CD8-positive, alpha-beta T cell (primary cell): ENCODE measurements at regions of chr5 and their contacts with region 1.

Region 1: GRCh38 chr5:62376064-62376463 is 27.6 kb downstream of the DIMT1 start:
- DNase-seq: no peak
- ATAC-seq: no peak
- H3K4me3 ChIP-seq: no peak overlapping the region
- H3K4me3 Mint-ChIP-seq: no peak overlapping the region
- H3K27ac ChIP-seq: no peak overlapping the region
- H3K27ac Mint-ChIP-seq: no peak overlapping the region
- H3K4me1 ChIP-seq: no peaks in the 10 kb centered on the region
- H3K4me1 Mint-ChIP-seq: no peaks in the 10 kb centered on the region
- H3K27me3 ChIP-seq: no peaks in the 10 kb centered on the region
- H3K27me3 Mint-ChIP-seq: no peaks in the 10 kb centered on the region
- CTCF ChIP-seq: no peak

Region 2: DNA sequence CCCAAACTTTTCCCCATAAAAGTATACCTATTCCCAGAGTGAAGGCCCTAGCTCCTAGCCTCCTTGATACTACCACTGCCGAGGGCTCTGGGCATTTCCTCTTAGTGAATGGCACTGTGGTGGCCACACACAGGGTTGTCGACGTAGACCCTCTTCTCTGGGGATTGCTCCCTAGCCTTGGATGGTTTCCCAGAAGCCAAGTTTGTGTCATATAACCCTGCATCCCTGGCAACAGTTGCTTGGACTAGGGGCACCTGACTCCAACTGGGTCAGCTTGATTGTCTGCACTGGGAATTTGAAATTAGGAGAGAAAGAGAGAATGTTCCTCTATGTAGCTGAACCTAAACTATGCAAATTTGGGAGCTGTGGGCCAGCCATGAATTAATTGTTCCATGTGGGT is 102.4 kb before region 1 on chr5:
- CTCF ChIA-PET with region 1: no interaction called
- POLR2A ChIA-PET with region 1: no interaction called
- intact Hi-C with region 1: no loop called
- DNase-seq: no peak
- ATAC-seq: no peak
- H3K4me3 ChIP-seq: no peak overlapping the region
- H3K4me3 Mint-ChIP-seq: no peak overlapping the region
- H3K27ac ChIP-seq: no peak overlapping the region
- H3K27ac Mint-ChIP-seq: no peak overlapping the region
- H3K4me1 ChIP-seq: peaks cover 7% of the 10 kb centered on the region
- H3K4me1 Mint-ChIP-seq: peaks cover 20% of the 10 kb centered on the region
- H3K27me3 ChIP-seq: no peaks in the 10 kb centered on the region
- H3K27me3 Mint-ChIP-seq: no peaks in the 10 kb centered on the region
- CTCF ChIP-seq: no peak

Region 3: DNA sequence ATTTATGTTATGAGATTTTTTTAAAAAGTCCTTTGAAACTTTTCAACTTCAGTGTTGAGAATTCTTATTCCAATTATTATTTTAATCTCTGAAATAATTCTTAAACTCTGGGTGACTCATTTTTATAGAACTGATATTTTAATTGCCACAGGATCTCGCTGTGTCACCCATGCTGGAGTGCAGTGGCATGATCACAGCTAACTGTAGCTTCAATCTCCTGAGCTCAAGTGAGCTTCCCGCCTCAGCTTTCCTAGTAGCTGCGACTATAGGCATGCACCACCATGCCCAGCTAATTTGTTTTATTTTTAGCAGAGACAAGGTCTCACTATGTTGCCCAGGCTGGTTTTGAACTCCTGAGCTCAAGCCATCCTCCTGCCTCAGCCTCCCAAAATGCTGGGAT is 13.4 kb before region 1 on chr5:
- CTCF ChIA-PET with region 1: interaction called, 3 read pairs
- POLR2A ChIA-PET with region 1: no interaction called
- intact Hi-C with region 1: loop called in 1 of 2 experiments (anchors 1 kb)
- DNase-seq: no peak
- ATAC-seq: no peak
- H3K4me3 ChIP-seq: no peak overlapping the region
- H3K4me3 Mint-ChIP-seq: no peak overlapping the region
- H3K27ac ChIP-seq: no peak overlapping the region
- H3K27ac Mint-ChIP-seq: no peak overlapping the region
- H3K4me1 ChIP-seq: no peaks in the 10 kb centered on the region
- H3K4me1 Mint-ChIP-seq: peaks cover 3% of the 10 kb centered on the region
- H3K27me3 ChIP-seq: no peaks in the 10 kb centered on the region
- H3K27me3 Mint-ChIP-seq: no peaks in the 10 kb centered on the region
- CTCF ChIP-seq: no peak

Region 4: DNA sequence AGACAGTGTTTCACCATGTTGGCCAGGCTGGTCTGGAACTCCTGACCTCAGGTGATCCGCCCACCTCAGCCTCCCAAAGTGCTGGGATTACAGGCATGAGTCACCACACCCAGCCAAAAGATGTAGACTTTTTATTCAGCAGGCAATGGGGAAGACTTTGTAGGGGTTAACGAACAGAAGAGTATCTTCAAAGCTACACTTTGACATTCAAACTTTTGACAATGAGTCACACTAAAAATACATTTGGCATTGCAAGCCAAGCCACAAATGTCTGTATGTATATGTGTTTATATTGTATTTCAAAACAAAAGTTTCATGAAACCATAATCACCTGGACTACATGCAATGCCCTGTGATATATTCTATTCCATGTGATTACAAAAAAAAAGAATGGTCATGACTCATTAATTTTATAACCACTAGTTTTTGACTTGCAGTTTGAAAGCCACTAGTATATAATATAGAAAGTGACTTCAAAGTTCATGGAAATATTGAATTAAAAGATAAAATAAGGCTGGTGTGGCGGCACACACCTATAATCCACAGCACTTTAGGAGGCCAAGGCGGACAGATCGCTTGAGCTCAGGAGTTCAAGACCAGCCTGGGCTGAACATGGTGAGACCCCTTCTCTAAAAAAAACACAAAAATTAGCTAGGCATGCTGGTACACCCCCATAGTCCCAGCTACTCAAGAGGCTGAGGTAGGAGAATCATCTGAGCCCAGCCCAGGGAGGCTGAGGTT is 19.3 kb after region 1 on chr5:
- CTCF ChIA-PET with region 1: interaction called, 3 read pairs
- POLR2A ChIA-PET with region 1: no interaction called
- intact Hi-C with region 1: loop called in 1 of 2 experiments (anchors 2 kb)
- DNase-seq: no peak
- ATAC-seq: peak; percentile 17
- H3K4me3 ChIP-seq: no peak overlapping the region
- H3K4me3 Mint-ChIP-seq: no peak overlapping the region
- H3K27ac ChIP-seq: no peak overlapping the region
- H3K27ac Mint-ChIP-seq: peak overlapping the region; percentile 27
- H3K4me1 ChIP-seq: peaks cover 14% of the 10 kb centered on the region
- H3K4me1 Mint-ChIP-seq: peaks cover 23% of the 10 kb centered on the region
- H3K27me3 ChIP-seq: no peaks in the 10 kb centered on the region
- H3K27me3 Mint-ChIP-seq: no peaks in the 10 kb centered on the region
- CTCF ChIP-seq: no peak

Region 5: DNA sequence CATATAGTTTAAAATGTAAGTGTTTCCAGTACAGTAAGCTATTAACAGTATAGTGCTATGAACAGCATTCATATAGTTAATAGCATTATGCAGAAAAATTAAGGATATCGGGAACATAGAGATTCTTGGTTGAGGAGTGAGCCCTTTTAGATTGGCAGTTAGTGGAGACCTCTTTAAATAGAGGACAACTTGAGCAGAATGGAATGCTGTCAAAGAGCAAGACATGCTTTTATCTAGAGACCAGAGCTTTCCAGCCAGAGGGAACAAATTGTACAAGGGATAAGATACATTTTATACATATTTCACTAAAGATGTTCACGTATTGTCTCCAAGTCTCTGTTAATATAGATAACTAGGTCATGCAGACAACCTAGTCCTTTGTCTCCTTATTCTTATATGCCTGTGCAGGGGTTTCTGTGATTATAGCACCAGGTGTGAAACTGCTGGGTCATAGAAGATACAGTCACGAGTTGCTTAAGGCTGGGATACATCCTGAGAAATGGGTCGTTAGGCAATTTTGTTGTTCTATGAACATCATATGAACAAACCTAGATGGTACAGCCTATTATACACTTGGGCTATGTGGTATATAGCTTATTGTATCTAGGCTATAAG is 42.5 kb after region 1 on chr5:
- CTCF ChIA-PET with region 1: no interaction called
- POLR2A ChIA-PET with region 1: no interaction called
- intact Hi-C with region 1: no loop called
- DNase-seq: no peak
- ATAC-seq: no peak
- H3K4me3 ChIP-seq: no peak overlapping the region
- H3K4me3 Mint-ChIP-seq: no peak overlapping the region
- H3K27ac ChIP-seq: no peak overlapping the region
- H3K27ac Mint-ChIP-seq: no peak overlapping the region
- H3K4me1 ChIP-seq: peaks cover 4% of the 10 kb centered on the region
- H3K4me1 Mint-ChIP-seq: peaks cover 38% of the 10 kb centered on the region
- H3K27me3 ChIP-seq: no peaks in the 10 kb centered on the region
- H3K27me3 Mint-ChIP-seq: no peaks in the 10 kb centered on the region
- CTCF ChIP-seq: no peak

Region 6: GRCh38 chr5:62562867-62563266 is 186.8 kb after region 1 on chr5:
- CTCF ChIA-PET with region 1: no interaction called
- POLR2A ChIA-PET with region 1: no interaction called
- intact Hi-C with region 1: no loop called
- DNase-seq: no peak
- ATAC-seq: no peak
- H3K4me3 ChIP-seq: no peak overlapping the region
- H3K4me3 Mint-ChIP-seq: no peak overlapping the region
- H3K27ac ChIP-seq: no peak overlapping the region
- H3K27ac Mint-ChIP-seq: no peak overlapping the region
- H3K4me1 ChIP-seq: no peaks in the 10 kb centered on the region
- H3K4me1 Mint-ChIP-seq: no peaks in the 10 kb centered on the region
- H3K27me3 ChIP-seq: no peaks in the 10 kb centered on the region
- H3K27me3 Mint-ChIP-seq: no peaks in the 10 kb centered on the region
- CTCF ChIP-seq: no peak